ENCODE measurements at regions of chr10 and their contacts with region 1.

Region 1: GRCh38 chr10:102480396-102480795 is 22.1 kb downstream of the ACTR1A start:
- DNase-seq: no peak
- ATAC-seq: no peak
- H3K4me3 ChIP-seq: no peak overlapping the region
- H3K4me3 Mint-ChIP-seq: no peak overlapping the region
- H3K27ac ChIP-seq: no peak overlapping the region
- H3K27ac Mint-ChIP-seq: no peak overlapping the region
- H3K4me1 ChIP-seq: peaks cover 0 to 4% of the 10 kb centered on the region in 2 donors
- H3K4me1 Mint-ChIP-seq: peaks cover 5 to 26% (median 15%) of the 10 kb centered on the region in 7 donors
- H3K27me3 ChIP-seq: no peaks in the 10 kb centered on the region
- H3K27me3 Mint-ChIP-seq: no peaks in the 10 kb centered on the region

Region 2: GRCh38 chr10:102225646-102226541 is 254.5 kb before region 1 on chr10 and contains the start of gene ELOVL3:
- CTCF ChIA-PET with region 1: interaction called, 4 read pairs
- POLR2A ChIA-PET with region 1: no interaction called
- intact Hi-C with region 1: loop called (anchors 1 kb)
- DNase-seq: peak; percentile 56 to 83 (median 79)
- ATAC-seq: peak; percentile 95
- H3K4me3 ChIP-seq: peak within 1 kb of the TSS; percentile 26
- H3K4me3 Mint-ChIP-seq: peak within 1 kb of the TSS; percentile 72 to 95 (median 80)
- H3K27ac ChIP-seq: no peak within 1 kb of the TSS
- H3K27ac Mint-ChIP-seq: peak within 1 kb of the TSS in 5 of 9 donors; percentile 14 to 78 (median 74)
- H3K4me1 ChIP-seq: peaks cover 20 to 22% of the 10 kb centered on the region in 2 donors
- H3K4me1 Mint-ChIP-seq: peaks cover 14 to 23% (median 21%) of the 10 kb centered on the region in 7 donors
- H3K27me3 ChIP-seq: peaks cover 3 to 5% of the 10 kb centered on the region in 2 donors
- H3K27me3 Mint-ChIP-seq: peaks cover 36 to 74% (median 39%) of the 10 kb centered on the region in 5 donors
- total RNA-seq, gene ELOVL3: not detected

Region 3: DNA sequence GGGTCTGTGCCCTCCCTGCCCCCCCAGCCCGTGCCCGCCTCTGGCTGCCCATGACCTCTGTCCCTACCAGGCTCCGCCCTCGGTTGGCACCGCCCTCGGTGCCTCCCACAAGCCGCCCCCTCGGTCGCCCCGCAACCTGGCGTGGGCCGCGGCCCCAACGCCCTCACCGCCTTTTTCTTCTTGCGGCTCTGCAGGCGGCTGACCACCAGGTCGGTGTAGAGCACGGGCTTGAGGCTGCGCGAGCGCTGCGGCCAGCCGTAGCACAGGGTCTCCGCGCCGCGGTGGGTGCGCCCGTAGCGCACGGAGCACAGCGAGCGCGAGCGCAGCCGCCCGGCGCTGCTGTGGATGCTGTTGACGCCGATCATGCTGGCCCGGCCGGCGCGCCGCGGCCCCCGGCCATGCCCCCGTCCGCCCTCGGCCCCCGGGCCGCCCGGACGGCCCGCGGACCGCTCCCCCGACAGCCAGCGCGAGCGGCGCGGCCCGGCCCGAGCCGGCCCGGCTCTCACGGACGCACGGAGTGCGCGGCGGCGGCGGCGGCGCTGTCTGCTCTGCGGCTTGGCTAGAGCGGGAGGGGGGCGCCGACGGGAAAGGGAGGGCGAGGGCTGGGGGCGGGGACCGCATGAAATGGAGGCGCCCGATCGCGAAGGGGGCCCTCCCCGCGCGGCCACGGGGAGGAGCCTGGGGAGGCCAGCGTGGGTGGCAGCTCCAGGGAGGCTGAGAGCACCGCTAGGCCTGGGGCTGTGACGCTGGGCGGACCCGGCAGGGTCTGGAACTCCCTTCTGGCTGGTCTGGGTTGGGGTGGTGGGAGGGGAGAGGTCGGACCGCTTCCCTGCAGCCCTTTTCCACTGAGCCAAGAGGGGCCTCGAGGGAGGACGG is 71.4 kb before region 1 on chr10:
- CTCF ChIA-PET with region 1: no interaction called
- POLR2A ChIA-PET with region 1: no interaction called
- intact Hi-C with region 1: loop called in 1 of 2 experiments (anchors 1 kb)
- DNase-seq: peak; percentile 53 to 88 (median 76)
- ATAC-seq: peak; percentile 79
- H3K4me3 ChIP-seq: peak overlapping the region; percentile 66
- H3K4me3 Mint-ChIP-seq: peak overlapping the region; percentile 73 to 91 (median 87)
- H3K27ac ChIP-seq: peak overlapping the region; percentile 72
- H3K27ac Mint-ChIP-seq: peak overlapping the region; percentile 42 to 92 (median 87)
- H3K4me1 ChIP-seq: peaks cover 5 to 36% of the 10 kb centered on the region in 2 donors
- H3K4me1 Mint-ChIP-seq: peaks cover 22 to 50% (median 42%) of the 10 kb centered on the region in 7 donors
- H3K27me3 ChIP-seq: peaks cover 0 to 12% of the 10 kb centered on the region in 2 donors
- H3K27me3 Mint-ChIP-seq: peaks cover 0 to 32% (median 18%) of the 10 kb centered on the region in 5 donors

Region 4: GRCh38 chr10:102450194-102450938 is 30.0 kb before region 1 on chr10:
- CTCF ChIA-PET with region 1: interaction called, 5 read pairs
- POLR2A ChIA-PET with region 1: no interaction called
- intact Hi-C with region 1: loop called (anchors 1 kb)
- DNase-seq: peak; percentile 85 to 95 (median 92)
- ATAC-seq: peak; percentile 90
- H3K4me3 ChIP-seq: peak overlapping the region; percentile 88
- H3K4me3 Mint-ChIP-seq: peak overlapping the region; percentile 89 to 97 (median 94)
- H3K27ac ChIP-seq: peak overlapping the region; percentile 90
- H3K27ac Mint-ChIP-seq: peak overlapping the region; percentile 81 to 97 (median 95)
- H3K4me1 ChIP-seq: peaks cover 12 to 14% of the 10 kb centered on the region in 2 donors
- H3K4me1 Mint-ChIP-seq: peaks cover 14 to 37% (median 27%) of the 10 kb centered on the region in 7 donors
- H3K27me3 ChIP-seq: no peaks in the 10 kb centered on the region
- H3K27me3 Mint-ChIP-seq: no peaks in the 10 kb centered on the region

Region 5: GRCh38 chr10:102583435-102584417 is 103.3 kb after region 1 on chr10:
- CTCF ChIA-PET with region 1: interaction called, 10 read pairs
- POLR2A ChIA-PET with region 1: no interaction called
- intact Hi-C with region 1: loop called in 1 of 2 experiments (anchors 1 kb)
- DNase-seq: peak; percentile 57 to 79 (median 76)
- ATAC-seq: peak; percentile 97
- H3K4me3 ChIP-seq: no peak overlapping the region
- H3K4me3 Mint-ChIP-seq: no peak overlapping the region
- H3K27ac ChIP-seq: no peak overlapping the region
- H3K27ac Mint-ChIP-seq: peak overlapping the region in 5 of 9 donors; percentile 14 to 76 (median 47)
- H3K4me1 ChIP-seq: no peaks in the 10 kb centered on the region
- H3K4me1 Mint-ChIP-seq: peaks cover 6 to 21% (median 16%) of the 10 kb centered on the region in 7 donors
- H3K27me3 ChIP-seq: no peaks in the 10 kb centered on the region
- H3K27me3 Mint-ChIP-seq: no peaks in the 10 kb centered on the region

Measured in naive thymus-derived CD4-positive, alpha-beta T cell (primary cell).